ENCODE measurements at regions of chr17 and their contacts with region 1.

Region 1: DNA sequence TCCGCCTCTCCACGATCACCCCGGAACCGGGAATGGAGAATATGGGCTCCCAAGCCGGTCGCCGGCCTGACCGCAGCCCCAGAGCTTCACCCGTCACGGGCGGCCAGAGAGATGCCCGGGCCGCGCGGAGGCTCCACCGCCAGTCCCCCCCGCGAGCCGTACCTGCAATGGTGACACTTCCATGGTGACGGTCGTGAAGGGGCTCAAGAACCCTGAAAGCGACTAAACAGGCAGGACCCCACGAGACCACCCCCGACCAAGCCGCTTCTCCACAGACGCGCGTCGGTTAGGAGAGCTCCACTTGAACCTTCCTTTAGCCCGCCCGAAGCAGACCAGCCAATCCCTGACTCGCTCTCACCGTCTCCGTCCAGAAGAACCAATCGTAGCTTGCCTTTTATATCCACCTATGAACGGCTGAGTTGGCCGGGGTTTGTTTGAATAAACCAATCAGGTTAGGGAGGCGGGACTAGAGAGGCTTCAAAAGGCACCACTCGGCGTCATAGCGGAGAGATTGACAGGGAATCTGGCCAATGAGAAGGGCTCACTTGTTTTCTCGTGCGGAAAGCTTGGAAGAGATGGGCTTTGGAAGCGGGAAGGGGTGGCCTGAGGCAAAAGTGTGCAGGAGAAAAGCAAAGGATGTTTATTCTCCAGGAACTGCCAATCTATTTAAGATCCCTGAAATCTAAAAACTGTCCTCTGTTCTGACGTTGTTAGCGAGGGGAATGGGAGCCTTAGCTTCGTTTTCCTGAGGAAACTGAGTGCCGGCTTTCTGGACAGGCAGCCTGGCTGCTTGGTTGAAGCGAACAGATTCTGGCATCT is at the start of gene TOP2A:
- DNase-seq: peak; percentile 100
- CTCF ChIP-seq: no peak

Region 2: DNA sequence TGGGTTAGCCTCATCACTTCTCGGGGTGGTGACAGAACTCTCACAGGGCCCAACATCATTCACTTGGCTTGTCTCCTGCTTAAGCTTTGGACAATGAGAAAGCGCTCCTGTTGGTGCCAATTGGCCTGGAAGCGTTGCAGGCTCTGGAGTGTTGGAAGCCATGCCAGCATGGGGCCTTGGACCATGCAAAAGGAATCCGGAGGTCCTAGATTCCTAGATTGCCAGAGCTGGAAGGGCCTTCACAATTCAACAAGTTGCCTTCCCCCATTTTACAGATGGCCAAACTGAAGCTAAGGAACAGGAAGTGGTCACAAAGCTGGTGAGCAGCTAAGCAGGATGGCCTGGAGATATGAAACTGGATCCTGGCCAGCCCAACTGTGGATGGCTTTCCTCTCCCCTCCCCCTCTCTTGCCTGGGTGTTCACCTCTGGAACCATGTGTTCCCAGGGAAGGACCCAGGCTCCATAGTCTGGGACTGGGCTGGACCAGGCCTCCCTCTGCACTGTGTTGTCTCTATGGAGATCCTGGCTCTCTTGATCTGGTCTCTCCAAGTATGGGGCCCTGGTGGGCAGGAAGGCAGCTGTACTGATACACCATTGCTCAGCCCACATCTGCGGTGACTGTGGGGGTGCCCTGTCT is 19.4 kb after region 1 on chr17:
- CTCF ChIA-PET with region 1: interaction called, 12 read pairs
- POLR2A ChIA-PET with region 1: no interaction called
- DNase-seq: no peak
- CTCF ChIP-seq: no peak

Region 3: GRCh38 chr17:40443583-40444327 is 25.9 kb after region 1 on chr17:
- CTCF ChIA-PET with region 1: interaction called, 12 read pairs
- POLR2A ChIA-PET with region 1: interaction called, 4 read pairs
- DNase-seq: peak; percentile 81
- CTCF ChIP-seq: peak; percentile 82

Region 4: GRCh38 chr17:40536295-40537171 is 118.7 kb after region 1 on chr17:
- CTCF ChIA-PET with region 1: interaction called, 53 read pairs
- POLR2A ChIA-PET with region 1: interaction called, 5 read pairs
- DNase-seq: no peak
- CTCF ChIP-seq: no peak

Measured in GM10248 (cell line).